ENCODE measurements at regions of chr4 and their contacts with region 1.

Region 1: DNA sequence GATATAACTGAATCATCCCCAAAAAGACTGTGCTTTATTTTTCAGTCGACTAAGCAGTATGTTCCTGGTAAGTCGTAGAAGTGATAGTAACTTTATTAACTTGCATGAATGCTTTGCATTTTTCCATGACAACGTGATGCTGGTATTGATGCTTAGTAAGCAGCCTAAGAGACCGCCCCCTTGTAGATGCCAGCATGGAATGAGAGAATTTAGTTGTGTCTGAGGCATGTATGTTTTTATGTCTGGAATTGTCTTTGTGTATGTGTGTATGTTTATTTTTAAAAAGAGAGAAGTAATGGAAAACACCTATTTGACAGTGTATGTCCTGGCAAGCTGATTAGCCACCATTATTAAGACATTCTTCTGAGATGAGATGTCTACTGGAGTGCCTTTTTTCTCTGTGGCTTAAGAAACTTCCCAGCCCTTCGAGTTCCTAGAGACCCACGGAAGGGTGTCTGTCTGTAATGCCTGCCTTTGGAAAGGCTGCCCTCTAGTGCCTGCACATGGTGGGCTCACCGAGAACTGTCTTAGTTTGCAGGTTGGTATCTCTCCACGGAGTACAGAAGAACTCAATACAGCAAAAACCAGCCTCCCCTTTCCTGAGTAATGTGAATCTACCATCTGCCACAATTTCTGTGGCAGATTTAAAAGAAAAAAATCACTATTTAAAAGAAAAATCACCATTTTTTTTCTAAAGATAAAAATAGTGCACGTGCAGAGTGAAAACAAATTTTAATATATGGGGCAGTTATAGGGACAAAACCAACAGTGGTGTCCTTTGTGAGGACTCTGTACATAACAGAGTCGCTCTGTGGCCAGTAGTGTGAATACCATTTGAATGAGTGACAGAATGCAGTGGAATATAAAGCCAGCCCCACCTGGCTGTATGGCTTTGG is 85.9 kb downstream of the AASDH start:
- DNase-seq: peak; percentile 43
- ATAC-seq: peak; percentile 99
- H3K4me3 ChIP-seq: no peak overlapping the region
- H3K27ac ChIP-seq: no peak overlapping the region
- H3K4me1 ChIP-seq: no peaks in the 10 kb centered on the region
- H3K27me3 ChIP-seq: no peaks in the 10 kb centered on the region
- CTCF ChIP-seq: peak; percentile 90 to 97 (median 90)
- EP300 ChIP-seq: no peak
- POLR2A ChIP-seq: no peak
- RAD21 ChIP-seq: peak; percentile 99

Region 2: DNA sequence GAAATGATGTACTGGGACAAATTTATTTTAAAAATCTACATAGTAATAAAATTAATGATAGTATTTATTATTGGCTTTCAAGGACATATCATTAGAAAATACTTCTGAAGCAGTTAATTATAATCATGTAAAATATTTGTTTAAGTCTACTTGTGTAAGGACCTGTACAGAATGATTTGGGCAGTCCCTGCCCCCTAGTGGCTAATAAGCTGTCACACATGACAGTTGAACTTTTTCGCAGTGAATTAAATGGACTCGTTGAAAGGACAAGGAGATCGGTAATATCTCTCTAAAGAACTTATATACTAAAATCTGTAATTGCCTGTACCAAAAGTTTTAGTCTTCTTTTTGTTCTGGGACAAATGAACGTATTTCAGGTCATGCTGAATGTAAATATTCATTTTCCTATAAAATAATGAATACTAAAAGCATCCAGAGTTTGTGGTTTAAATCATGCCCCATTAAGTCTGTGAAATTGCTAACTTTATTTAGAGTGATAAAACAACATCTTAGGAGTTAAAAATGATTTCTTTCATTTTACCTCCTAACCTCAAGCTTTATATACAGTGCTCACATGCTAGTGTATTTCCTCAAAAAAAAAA is 434.4 kb before region 1 on chr4:
- CTCF ChIA-PET with region 1: interaction called, 3 read pairs
- POLR2A ChIA-PET with region 1: no interaction called
- RAD21 ChIA-PET with region 1: no interaction called
- SMC1A ChIA-PET with region 1: interaction called, 5 read pairs
- in situ Hi-C with region 1: no loop called
- intact Hi-C with region 1: loop called (anchors 2 kb)
- DNase-seq: peak; percentile 38
- ATAC-seq: peak; percentile 98
- H3K4me3 ChIP-seq: no peak overlapping the region
- H3K27ac ChIP-seq: peak overlapping the region; percentile 31; the same call in 1 of the 2 replicates
- H3K4me1 ChIP-seq: peaks cover 7% of the 10 kb centered on the region; the same call in 1 of the 2 replicates
- H3K27me3 ChIP-seq: no peaks in the 10 kb centered on the region
- CTCF ChIP-seq: peak; percentile 70 to 77 (median 77); a peak in 5 of 6 replicates
- EP300 ChIP-seq: no peak
- POLR2A ChIP-seq: no peak
- RAD21 ChIP-seq: peak; percentile 80

Region 3: GRCh38 chr4:56048702-56049431 is 252.6 kb before region 1 on chr4:
- CTCF ChIA-PET with region 1: interaction called, 3 read pairs
- POLR2A ChIA-PET with region 1: no interaction called
- RAD21 ChIA-PET with region 1: no interaction called
- SMC1A ChIA-PET with region 1: no interaction called
- in situ Hi-C with region 1: no loop called
- intact Hi-C with region 1: loop called (anchors 10 kb)
- DNase-seq: peak; percentile 2
- ATAC-seq: peak; percentile 97
- H3K4me3 ChIP-seq: peak overlapping the region; percentile 84
- H3K27ac ChIP-seq: no peak overlapping the region
- H3K4me1 ChIP-seq: peaks cover 9% of the 10 kb centered on the region; the same call in 1 of the 2 replicates
- H3K27me3 ChIP-seq: peaks cover 0 to 8% of the 10 kb centered on the region in 2 experiments; a peak in 2 of 4 replicates
- CTCF ChIP-seq: peak; percentile 17 to 70 (median 60); a peak in 3 of 6 replicates
- EP300 ChIP-seq: no peak
- POLR2A ChIP-seq: peak; percentile 57; the same call in 1 of the 2 replicates
- RAD21 ChIP-seq: peak; percentile 52

Region 4: GRCh38 chr4:56129431-56129861 is 172.0 kb before region 1 on chr4:
- CTCF ChIA-PET with region 1: interaction called, 3 read pairs
- POLR2A ChIA-PET with region 1: no interaction called
- RAD21 ChIA-PET with region 1: no interaction called
- SMC1A ChIA-PET with region 1: no interaction called
- in situ Hi-C with region 1: no loop called
- intact Hi-C with region 1: loop called (anchors 10 kb)
- DNase-seq: no peak
- ATAC-seq: peak; percentile 77
- H3K4me3 ChIP-seq: no peak overlapping the region
- H3K27ac ChIP-seq: no peak overlapping the region
- H3K4me1 ChIP-seq: no peaks in the 10 kb centered on the region
- H3K27me3 ChIP-seq: no peaks in the 10 kb centered on the region
- CTCF ChIP-seq: peak; percentile 38 to 54 (median 40)
- EP300 ChIP-seq: no peak
- POLR2A ChIP-seq: no peak
- RAD21 ChIP-seq: peak; percentile 53

Region 5: DNA sequence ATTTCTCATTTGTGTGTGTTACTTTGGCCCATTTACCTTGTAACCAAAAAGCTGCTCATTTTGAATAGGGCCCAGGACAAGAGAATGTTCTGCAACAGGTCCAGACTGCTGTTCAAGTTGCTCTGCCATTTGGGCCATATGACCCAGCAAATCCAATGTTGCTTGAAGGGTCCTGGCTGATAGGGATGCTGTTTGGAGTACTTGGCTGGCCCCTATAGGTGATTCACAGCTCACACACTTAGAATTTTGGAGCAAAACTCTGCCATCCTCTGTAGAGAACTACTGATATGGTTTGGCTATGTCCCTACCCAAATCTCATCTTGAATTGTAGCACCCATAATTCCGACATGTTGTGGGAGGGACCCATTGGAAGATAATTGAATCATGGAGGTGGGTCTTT is 45.6 kb before region 1 on chr4:
- CTCF ChIA-PET with region 1: no interaction called
- POLR2A ChIA-PET with region 1: no interaction called
- RAD21 ChIA-PET with region 1: no interaction called
- SMC1A ChIA-PET with region 1: no interaction called
- in situ Hi-C with region 1: no loop called
- intact Hi-C with region 1: no loop called
- DNase-seq: no peak
- ATAC-seq: no peak
- H3K4me3 ChIP-seq: no peak overlapping the region
- H3K27ac ChIP-seq: no peak overlapping the region
- H3K4me1 ChIP-seq: no peaks in the 10 kb centered on the region
- H3K27me3 ChIP-seq: no peaks in the 10 kb centered on the region
- CTCF ChIP-seq: no peak
- EP300 ChIP-seq: no peak
- POLR2A ChIP-seq: no peak
- RAD21 ChIP-seq: no peak

Region 6: GRCh38 chr4:56271131-56271530 is 30.3 kb before region 1 on chr4:
- CTCF ChIA-PET with region 1: no interaction called
- POLR2A ChIA-PET with region 1: no interaction called
- RAD21 ChIA-PET with region 1: no interaction called
- SMC1A ChIA-PET with region 1: no interaction called
- in situ Hi-C with region 1: no loop called
- intact Hi-C with region 1: no loop called
- DNase-seq: no peak
- ATAC-seq: no peak
- H3K4me3 ChIP-seq: no peak overlapping the region
- H3K27ac ChIP-seq: no peak overlapping the region
- H3K4me1 ChIP-seq: no peaks in the 10 kb centered on the region
- H3K27me3 ChIP-seq: no peaks in the 10 kb centered on the region
- CTCF ChIP-seq: no peak
- EP300 ChIP-seq: no peak
- POLR2A ChIP-seq: no peak
- RAD21 ChIP-seq: no peak

Region 7: GRCh38 chr4:56828784-56829535 is 527.5 kb after region 1 on chr4:
- CTCF ChIA-PET with region 1: no interaction called
- POLR2A ChIA-PET with region 1: no interaction called
- RAD21 ChIA-PET with region 1: no interaction called
- SMC1A ChIA-PET with region 1: no interaction called
- in situ Hi-C with region 1: no loop called
- intact Hi-C with region 1: loop called (anchors 10 kb)
- DNase-seq: no peak
- ATAC-seq: peak; percentile 66
- H3K4me3 ChIP-seq: no peak overlapping the region
- H3K27ac ChIP-seq: no peak overlapping the region
- H3K4me1 ChIP-seq: peaks cover 6% of the 10 kb centered on the region
- H3K27me3 ChIP-seq: no peaks in the 10 kb centered on the region
- CTCF ChIP-seq: no peak
- EP300 ChIP-seq: peak in 1 of 2 experiments; percentile 29; a peak in 1 of 4 replicates
- POLR2A ChIP-seq: no peak
- RAD21 ChIP-seq: no peak

Measured in GM12878 (cell line).